IMR-90 (cell line): ENCODE measurements at regions of chr15 and their contacts with region 1.

Region 1: DNA sequence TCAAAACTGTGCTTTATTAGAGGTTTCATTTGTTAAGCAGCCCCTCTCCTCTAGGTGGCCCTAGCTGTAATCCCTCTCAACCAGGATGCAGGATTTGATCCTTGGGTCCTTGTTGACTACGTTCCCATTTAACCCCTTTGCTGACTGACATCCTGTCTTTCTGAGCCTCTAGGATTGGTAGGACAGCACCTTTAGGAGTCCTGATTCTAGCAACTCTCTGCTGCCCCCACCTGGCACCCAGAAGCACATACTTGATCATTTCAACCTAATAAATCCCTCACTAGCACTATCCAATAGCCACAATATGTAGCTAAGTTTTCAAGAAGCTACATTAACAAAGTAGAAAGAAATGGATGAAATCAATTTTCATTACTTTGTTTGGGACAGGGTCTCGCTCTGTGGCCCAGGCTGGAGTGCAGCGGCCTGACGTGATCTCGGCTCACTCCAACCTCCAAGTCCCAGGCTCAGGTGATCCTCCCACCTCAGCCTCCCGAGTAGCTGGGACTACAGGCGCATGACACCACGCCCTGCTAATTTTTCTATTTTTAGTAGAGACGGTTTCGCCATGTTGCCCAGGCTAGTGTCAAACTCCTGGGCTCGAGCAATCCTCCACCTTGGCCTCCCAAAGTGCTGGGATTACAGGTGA is 28.3 kb downstream of the RSL24D1 start:
- DNase-seq: peak; percentile 67
- ATAC-seq: peak; percentile 97
- H3K4me3 ChIP-seq: no peak overlapping the region
- H3K27ac ChIP-seq: no peak overlapping the region
- H3K4me1 ChIP-seq: no peaks in the 10 kb centered on the region
- H3K27me3 ChIP-seq: no peaks in the 10 kb centered on the region
- CTCF ChIP-seq: peak; percentile 70
- POLR2A ChIP-seq: no peak
- RAD21 ChIP-seq: peak; percentile 49

Region 2: DNA sequence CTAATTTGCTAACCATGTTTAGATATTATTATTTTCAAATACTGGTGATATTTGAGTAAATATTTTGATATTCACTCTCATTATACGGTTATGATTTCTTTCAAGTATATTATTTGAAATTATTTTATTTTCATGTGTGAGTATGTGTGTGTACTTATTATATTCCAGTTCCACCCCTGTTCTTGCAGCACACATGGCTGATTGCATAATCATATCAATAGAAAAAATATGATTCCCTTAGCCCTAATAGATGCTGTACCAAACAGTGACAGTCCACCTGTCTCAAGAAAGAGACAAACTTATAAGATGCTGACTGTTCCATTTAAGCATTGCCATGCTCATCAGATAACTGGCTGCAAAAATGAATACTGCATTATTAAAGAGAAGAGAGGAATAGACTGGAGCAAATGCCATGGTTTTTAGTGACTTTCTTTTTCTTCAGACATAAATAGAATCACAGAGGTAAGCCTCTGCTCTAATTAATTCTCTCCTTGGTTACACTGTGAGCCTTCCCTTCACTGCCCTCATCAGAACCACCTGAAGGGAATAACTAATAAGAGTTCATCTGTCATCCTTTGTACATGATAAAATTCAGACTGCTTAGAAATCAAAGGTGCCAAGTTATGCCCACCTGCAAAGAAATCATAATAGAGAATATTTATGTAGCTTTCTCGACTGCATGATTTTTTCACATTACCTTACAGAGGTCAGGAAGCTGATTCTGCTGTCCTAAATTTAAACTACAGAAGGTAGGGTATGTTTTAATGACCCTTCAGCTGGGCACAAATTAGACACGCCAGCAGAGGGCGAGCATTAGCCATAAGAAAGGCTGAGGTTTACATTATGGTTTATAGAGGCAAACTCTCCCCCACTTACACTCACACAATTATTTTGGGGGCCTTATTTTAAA is 1205.9 kb before region 1 on chr15:
- CTCF ChIA-PET with region 1: no interaction called
- POLR2A ChIA-PET with region 1: no interaction called
- dilution Hi-C with region 1: no loop called
- in situ Hi-C with region 1: no loop called
- intact Hi-C with region 1: loop called (anchors 1 kb)
- DNase-seq: no peak
- ATAC-seq: no peak
- H3K4me3 ChIP-seq: no peak overlapping the region
- H3K27ac ChIP-seq: no peak overlapping the region
- H3K4me1 ChIP-seq: no peaks in the 10 kb centered on the region
- H3K27me3 ChIP-seq: no peaks in the 10 kb centered on the region
- CTCF ChIP-seq: peak; percentile 34
- POLR2A ChIP-seq: no peak
- RAD21 ChIP-seq: peak; percentile 38

Region 3: GRCh38 chr15:54082836-54083492 is 1085.5 kb before region 1 on chr15:
- CTCF ChIA-PET with region 1: no interaction called
- POLR2A ChIA-PET with region 1: no interaction called
- dilution Hi-C with region 1: no loop called
- in situ Hi-C with region 1: no loop called
- intact Hi-C with region 1: loop called (anchors 10 kb)
- DNase-seq: peak; percentile 0
- ATAC-seq: peak; percentile 63; the same call in 1 of the 2 replicates
- H3K4me3 ChIP-seq: no peak overlapping the region
- H3K27ac ChIP-seq: no peak overlapping the region
- H3K4me1 ChIP-seq: no peaks in the 10 kb centered on the region
- H3K27me3 ChIP-seq: no peaks in the 10 kb centered on the region
- CTCF ChIP-seq: peak; percentile 55
- POLR2A ChIP-seq: no peak
- RAD21 ChIP-seq: peak; percentile 53

Region 4: GRCh38 chr15:54941417-54941816 is 227.0 kb before region 1 on chr15:
- CTCF ChIA-PET with region 1: no interaction called
- POLR2A ChIA-PET with region 1: no interaction called
- dilution Hi-C with region 1: no loop called
- in situ Hi-C with region 1: no loop called
- intact Hi-C with region 1: no loop called
- DNase-seq: no peak
- ATAC-seq: no peak
- H3K4me3 ChIP-seq: no peak overlapping the region
- H3K27ac ChIP-seq: no peak overlapping the region
- H3K4me1 ChIP-seq: no peaks in the 10 kb centered on the region
- H3K27me3 ChIP-seq: no peaks in the 10 kb centered on the region
- CTCF ChIP-seq: no peak
- POLR2A ChIP-seq: no peak
- RAD21 ChIP-seq: no peak

Region 5: DNA sequence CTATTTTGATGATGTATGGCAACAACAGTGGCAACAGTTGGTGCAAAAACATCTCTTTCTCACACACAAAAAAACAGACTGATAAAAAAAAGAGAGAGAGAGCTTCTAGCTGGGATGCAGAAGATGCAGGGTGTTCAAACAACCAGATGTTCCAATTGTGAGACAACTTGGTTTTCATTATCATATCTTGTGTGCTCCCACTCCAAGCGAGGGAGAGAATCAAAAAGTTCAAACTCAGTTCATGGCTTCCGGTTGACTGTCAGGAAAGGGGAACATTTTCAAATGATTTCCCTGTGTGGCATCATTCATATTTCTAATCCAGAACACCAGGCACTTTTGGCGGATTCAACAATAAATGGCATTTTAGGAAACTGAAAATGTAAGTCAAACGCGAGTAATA is 43.8 kb before region 1 on chr15:
- CTCF ChIA-PET with region 1: no interaction called
- POLR2A ChIA-PET with region 1: no interaction called
- dilution Hi-C with region 1: no loop called
- in situ Hi-C with region 1: no loop called
- intact Hi-C with region 1: no loop called
- DNase-seq: no peak
- ATAC-seq: no peak
- H3K4me3 ChIP-seq: no peak overlapping the region
- H3K27ac ChIP-seq: no peak overlapping the region
- H3K4me1 ChIP-seq: no peaks in the 10 kb centered on the region
- H3K27me3 ChIP-seq: no peaks in the 10 kb centered on the region
- CTCF ChIP-seq: no peak
- POLR2A ChIP-seq: no peak
- RAD21 ChIP-seq: no peak

Region 6: DNA sequence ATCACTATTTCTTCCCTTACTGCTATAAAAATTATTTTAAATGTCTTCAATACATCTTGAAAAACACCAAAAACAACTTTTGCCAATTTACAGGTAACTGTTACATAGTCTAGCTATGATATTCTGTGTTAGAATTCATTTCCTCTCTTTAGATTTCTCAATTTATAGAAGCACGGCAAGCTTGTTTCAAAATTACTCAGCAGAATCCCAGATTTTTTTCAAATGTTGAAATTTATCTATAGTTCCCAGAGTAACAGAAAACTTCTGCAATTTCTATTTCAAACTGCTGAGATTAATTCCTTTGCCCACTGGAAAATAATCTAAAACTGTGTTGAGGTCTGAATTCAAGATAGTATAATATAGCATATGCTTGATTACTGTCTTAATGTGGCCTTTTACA is 198.5 kb after region 1 on chr15:
- CTCF ChIA-PET with region 1: no interaction called
- POLR2A ChIA-PET with region 1: no interaction called
- dilution Hi-C with region 1: no loop called
- in situ Hi-C with region 1: no loop called
- intact Hi-C with region 1: no loop called
- DNase-seq: no peak
- ATAC-seq: no peak
- H3K4me3 ChIP-seq: no peak overlapping the region
- H3K27ac ChIP-seq: no peak overlapping the region
- H3K4me1 ChIP-seq: no peaks in the 10 kb centered on the region
- H3K27me3 ChIP-seq: no peaks in the 10 kb centered on the region
- CTCF ChIP-seq: no peak
- POLR2A ChIP-seq: no peak
- RAD21 ChIP-seq: no peak

Region 7: GRCh38 chr15:55518641-55519040 is 350.2 kb after region 1 on chr15:
- CTCF ChIA-PET with region 1: interaction called, 10 read pairs
- POLR2A ChIA-PET with region 1: no interaction called
- dilution Hi-C with region 1: no loop called
- in situ Hi-C with region 1: no loop called
- intact Hi-C with region 1: no loop called
- DNase-seq: no peak
- ATAC-seq: no peak
- H3K4me3 ChIP-seq: no peak overlapping the region
- H3K27ac ChIP-seq: no peak overlapping the region
- H3K4me1 ChIP-seq: no peaks in the 10 kb centered on the region
- H3K27me3 ChIP-seq: peaks cover 5% of the 10 kb centered on the region; the same call in 1 of the 2 replicates
- CTCF ChIP-seq: peak; percentile 14; the same call in 1 of the 2 replicates
- POLR2A ChIP-seq: no peak
- RAD21 ChIP-seq: no peak